ENCODE measurements at regions of chr15 and their contacts with region 1.

Region 1: GRCh38 chr15:92808978-92809879 is 90.9 kb upstream of the CHD2 start:
- DNase-seq: peak; percentile 92 to 99 (median 96)

Region 2: GRCh38 chr15:92903941-92904831 is 95.0 kb after region 1 on chr15:
- intact Hi-C with region 1: loop called (anchors 1 kb)
- DNase-seq: peak; percentile 98 to 100 (median 99)

Measured in posterior cingulate gyrus (tissue), 11 donors.